Ovary (tissue), 10 donors: ENCODE measurements at regions of chr14 and their contacts with region 1.

Region 1: DNA sequence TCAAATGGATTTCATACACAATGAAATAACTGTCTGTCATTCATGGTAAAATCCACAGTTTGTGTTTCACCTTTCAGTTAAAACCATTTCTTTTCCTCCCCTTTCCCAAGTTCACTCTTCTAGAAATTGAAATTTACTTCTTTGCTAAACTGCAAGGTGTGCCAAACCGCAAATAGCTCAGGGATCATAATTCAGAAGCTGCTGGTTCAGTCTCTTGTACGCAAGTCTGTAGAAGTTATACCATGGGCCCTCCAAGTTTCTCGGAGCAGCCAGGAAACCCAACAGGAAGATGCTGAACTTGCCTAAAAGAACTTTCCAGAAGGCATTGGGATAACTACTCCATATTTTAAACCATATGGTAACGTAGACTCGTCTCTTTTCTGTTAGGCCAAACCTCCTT is 268.9 kb downstream of the FLRT2 start:
- DNase-seq: no peak
- H3K4me3 ChIP-seq: no peak overlapping the region
- H3K27ac ChIP-seq: no peak overlapping the region
- H3K4me1 ChIP-seq: no peaks in the 10 kb centered on the region
- H3K27me3 ChIP-seq: no peaks in the 10 kb centered on the region
- CTCF ChIP-seq: no peak
- EP300 ChIP-seq: no peak
- POLR2A ChIP-seq: no peak

Region 2: DNA sequence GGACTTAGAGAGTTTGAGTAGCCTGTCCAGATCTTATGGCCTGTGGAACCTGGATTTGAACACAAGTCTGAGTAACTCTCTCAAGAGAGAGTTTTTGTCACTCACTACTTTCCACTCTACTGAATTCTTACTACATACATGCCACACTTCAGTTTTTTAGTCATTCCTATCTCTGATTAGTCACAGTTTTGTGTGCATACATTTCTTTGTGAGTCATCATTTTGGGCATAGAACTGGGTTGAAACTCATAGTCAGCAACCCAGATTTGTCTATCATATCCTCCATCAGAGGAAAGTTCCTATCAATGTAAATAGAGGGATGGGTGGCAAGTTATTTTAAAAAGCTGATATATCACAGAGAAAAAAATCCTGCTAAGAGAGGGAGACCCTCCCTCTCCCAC is 226.0 kb before region 1 on chr14:
- intact Hi-C with region 1: no loop called
- DNase-seq: no peak
- H3K4me3 ChIP-seq: no peak overlapping the region
- H3K27ac ChIP-seq: no peak overlapping the region
- H3K4me1 ChIP-seq: peaks cover 11% of the 10 kb centered on the region
- H3K27me3 ChIP-seq: no peaks in the 10 kb centered on the region
- CTCF ChIP-seq: no peak
- EP300 ChIP-seq: no peak
- POLR2A ChIP-seq: no peak

Region 3: DNA sequence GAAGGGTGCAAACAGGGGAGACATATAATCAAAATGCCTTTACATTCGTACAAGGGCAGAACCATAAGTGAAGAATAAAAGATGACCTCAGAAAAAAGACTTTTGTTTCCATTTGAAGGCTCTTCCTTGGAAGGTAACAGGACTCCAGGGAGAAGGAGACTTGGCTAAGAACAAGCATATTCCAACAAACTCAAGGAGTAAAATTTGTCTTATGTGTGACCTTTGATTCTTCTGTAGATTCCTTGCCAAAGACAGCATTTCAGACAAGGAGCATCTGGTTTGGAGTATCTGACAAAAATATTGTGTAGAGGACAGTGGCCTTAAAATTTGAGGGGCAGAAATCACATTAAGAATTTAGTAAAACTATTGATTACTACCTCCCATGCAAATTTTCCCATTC is 723.0 kb after region 1 on chr14:
- intact Hi-C with region 1: loop called in 1 of 4 experiments (anchors 10 kb)
- DNase-seq: no peak
- H3K4me3 ChIP-seq: no peak overlapping the region
- H3K27ac ChIP-seq: no peak overlapping the region
- H3K4me1 ChIP-seq: no peaks in the 10 kb centered on the region
- H3K27me3 ChIP-seq: no peaks in the 10 kb centered on the region
- CTCF ChIP-seq: no peak
- EP300 ChIP-seq: no peak
- POLR2A ChIP-seq: no peak

Region 4: GRCh38 chr14:86826661-86827060 is 1027.8 kb after region 1 on chr14:
- intact Hi-C with region 1: no loop called
- DNase-seq: no peak
- H3K4me3 ChIP-seq: no peak overlapping the region
- H3K27ac ChIP-seq: no peak overlapping the region
- H3K4me1 ChIP-seq: no peaks in the 10 kb centered on the region
- H3K27me3 ChIP-seq: no peaks in the 10 kb centered on the region
- CTCF ChIP-seq: no peak
- EP300 ChIP-seq: no peak
- POLR2A ChIP-seq: no peak